Pancreas (tissue), 10 donors: ENCODE measurements at regions of chr1 and their contacts with region 1.

Region 1: GRCh38 chr1:155250633-155251449 is 4.4 kb downstream of the ENTREP3 start:
- DNase-seq: peak; percentile 87 to 99 (median 94)
- ATAC-seq: peak; percentile 85 to 91 (median 88)
- H3K4me3 ChIP-seq: peak overlapping the region in 2 of 4 donors; percentile 8 to 36
- H3K27ac ChIP-seq: no peak overlapping the region
- H3K4me1 ChIP-seq: peaks cover 0 to 15% (median 0%) of the 10 kb centered on the region in 3 donors
- H3K27me3 ChIP-seq: no peaks in the 10 kb centered on the region
- CTCF ChIP-seq: peak; percentile 100

Region 2: DNA sequence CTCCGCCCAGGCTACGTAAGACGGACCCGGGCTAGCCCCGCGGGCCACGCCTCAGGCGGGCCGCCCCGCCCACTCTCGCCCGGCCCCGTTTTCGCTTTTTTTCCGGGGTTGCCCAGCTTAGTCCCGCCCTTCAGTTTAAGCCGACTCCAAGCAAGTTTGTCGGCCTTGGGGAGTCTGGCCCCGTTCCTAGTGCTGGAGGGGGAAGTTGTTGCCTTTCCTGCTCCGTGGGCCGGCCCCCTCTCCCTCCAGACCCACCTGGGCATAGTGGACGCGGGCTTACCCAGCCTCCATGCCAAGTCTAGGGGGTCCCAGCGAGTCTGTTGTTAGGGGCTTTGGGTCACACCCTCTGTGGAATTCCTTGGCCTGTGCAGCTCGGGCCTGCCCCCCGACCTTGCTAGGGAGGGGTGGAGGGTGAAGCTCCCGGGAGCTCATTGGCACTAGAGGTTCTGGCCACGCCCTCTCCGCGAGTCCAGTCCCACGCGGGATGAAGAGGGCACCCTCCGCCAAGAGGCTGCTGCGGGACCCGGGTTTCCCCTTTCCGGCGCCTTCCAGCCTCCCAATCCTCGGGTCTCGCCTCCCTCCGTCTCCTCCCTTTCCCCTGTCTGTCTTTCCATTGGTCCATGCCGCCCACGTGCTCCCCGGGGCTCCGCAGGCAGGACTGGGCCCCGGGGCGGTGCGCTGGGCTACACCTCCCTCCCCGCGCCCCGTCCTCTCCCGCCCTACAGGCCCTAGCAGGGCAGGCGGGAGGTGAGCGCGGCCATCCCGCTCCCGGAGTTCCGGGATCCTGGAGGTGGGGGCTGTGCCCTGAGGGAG is 73.2 kb after region 1 on chr1:
- intact Hi-C with region 1: loop called in 2 of 3 experiments (anchors 5 to 10 kb)
- DNase-seq: peak; percentile 93 to 97 (median 95)
- ATAC-seq: peak; percentile 85 to 91 (median 86)
- H3K4me3 ChIP-seq: peak overlapping the region; percentile 79 to 91 (median 86)
- H3K27ac ChIP-seq: peak overlapping the region; percentile 81 to 97 (median 88)
- H3K4me1 ChIP-seq: peaks cover 0 to 7% (median 0%) of the 10 kb centered on the region in 3 donors
- H3K27me3 ChIP-seq: no peaks in the 10 kb centered on the region
- CTCF ChIP-seq: no peak

Region 3: GRCh38 chr1:155591770-155592169 is 340.9 kb after region 1 on chr1:
- intact Hi-C with region 1: loop called in 2 of 3 experiments (anchors 5 to 10 kb)
- DNase-seq: peak in 1 of 6 donors; percentile 16
- ATAC-seq: peak; percentile 56 to 89 (median 84)
- H3K4me3 ChIP-seq: no peak overlapping the region
- H3K27ac ChIP-seq: no peak overlapping the region
- H3K4me1 ChIP-seq: no peaks in the 10 kb centered on the region
- H3K27me3 ChIP-seq: no peaks in the 10 kb centered on the region
- CTCF ChIP-seq: peak; percentile 23 to 43 (median 38)